WTC11 (cell line): ENCODE measurements at regions of chr17 and their contacts with region 1.

Region 1: DNA sequence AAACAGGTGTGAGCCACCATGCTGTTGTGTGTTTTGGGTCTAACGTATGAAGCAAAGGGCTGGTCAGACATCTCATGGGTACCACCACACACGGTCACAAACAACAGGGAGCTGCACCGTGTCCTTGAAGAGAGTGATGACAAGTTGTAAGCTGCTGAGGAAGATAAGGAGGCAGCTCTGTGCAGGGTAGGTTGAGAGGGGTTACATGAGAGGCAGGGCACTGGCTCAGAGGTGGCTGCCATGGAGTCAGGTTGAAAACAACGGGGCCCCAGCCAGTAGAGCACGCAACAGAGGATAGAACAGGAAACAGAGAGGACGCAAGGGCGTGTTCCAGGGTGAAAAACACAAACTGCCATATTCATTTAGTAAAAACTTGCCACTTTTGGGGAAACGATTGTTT is 52.2 kb downstream of the TRARG1 start:
- DNase-seq: peak; percentile 2
- ATAC-seq: no peak
- H3K4me3 Mint-ChIP-seq: no peak overlapping the region
- H3K27ac Mint-ChIP-seq: peak overlapping the region; percentile 34; the same call in 1 of the 2 replicates
- H3K4me1 Mint-ChIP-seq: no peaks in the 10 kb centered on the region
- H3K27me3 Mint-ChIP-seq: no peaks in the 10 kb centered on the region; the same call in 1 of the 2 replicates
- CTCF ChIP-seq: no peak

Region 2: GRCh38 chr17:1260086-1260769 is 71.5 kb before region 1 on chr17:
- CTCF ChIA-PET with region 1: interaction called, 20 read pairs
- POLR2A ChIA-PET with region 1: no interaction called
- DNase-seq: no peak
- ATAC-seq: no peak; the same call in 1 of the 2 replicates
- H3K4me3 Mint-ChIP-seq: peak overlapping the region; percentile 86
- H3K27ac Mint-ChIP-seq: no peak overlapping the region
- H3K4me1 Mint-ChIP-seq: peaks cover 12% of the 10 kb centered on the region
- H3K27me3 Mint-ChIP-seq: peaks cover 41% of the 10 kb centered on the region
- CTCF ChIP-seq: no peak

Region 3: DNA sequence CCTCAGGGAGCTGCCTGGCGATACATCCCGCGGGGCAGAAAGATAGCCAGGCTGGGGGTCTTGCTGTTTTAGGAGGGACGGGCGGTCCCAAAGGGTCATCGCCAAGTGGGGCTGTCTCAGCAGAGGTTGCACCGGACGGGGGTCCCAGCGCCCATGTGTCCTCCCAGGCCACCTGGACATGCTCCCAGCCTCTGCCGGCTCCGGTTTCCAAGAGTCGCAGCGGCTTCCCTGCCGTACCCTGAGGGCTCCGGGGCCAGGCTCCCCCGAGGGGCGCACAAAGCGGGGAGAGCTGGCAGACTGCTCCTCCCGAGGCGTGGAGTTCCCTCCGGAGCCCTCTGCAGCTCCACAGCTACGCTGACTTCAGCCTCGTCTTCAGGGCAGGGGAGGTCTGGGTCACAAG is 51.1 kb before region 1 on chr17:
- CTCF ChIA-PET with region 1: interaction called, 26 read pairs
- POLR2A ChIA-PET with region 1: interaction called, 3 read pairs
- DNase-seq: no peak
- ATAC-seq: no peak
- H3K4me3 Mint-ChIP-seq: no peak overlapping the region
- H3K27ac Mint-ChIP-seq: no peak overlapping the region
- H3K4me1 Mint-ChIP-seq: no peaks in the 10 kb centered on the region
- H3K27me3 Mint-ChIP-seq: no peaks in the 10 kb centered on the region; the same call in 1 of the 2 replicates
- CTCF ChIP-seq: no peak

Region 4: DNA sequence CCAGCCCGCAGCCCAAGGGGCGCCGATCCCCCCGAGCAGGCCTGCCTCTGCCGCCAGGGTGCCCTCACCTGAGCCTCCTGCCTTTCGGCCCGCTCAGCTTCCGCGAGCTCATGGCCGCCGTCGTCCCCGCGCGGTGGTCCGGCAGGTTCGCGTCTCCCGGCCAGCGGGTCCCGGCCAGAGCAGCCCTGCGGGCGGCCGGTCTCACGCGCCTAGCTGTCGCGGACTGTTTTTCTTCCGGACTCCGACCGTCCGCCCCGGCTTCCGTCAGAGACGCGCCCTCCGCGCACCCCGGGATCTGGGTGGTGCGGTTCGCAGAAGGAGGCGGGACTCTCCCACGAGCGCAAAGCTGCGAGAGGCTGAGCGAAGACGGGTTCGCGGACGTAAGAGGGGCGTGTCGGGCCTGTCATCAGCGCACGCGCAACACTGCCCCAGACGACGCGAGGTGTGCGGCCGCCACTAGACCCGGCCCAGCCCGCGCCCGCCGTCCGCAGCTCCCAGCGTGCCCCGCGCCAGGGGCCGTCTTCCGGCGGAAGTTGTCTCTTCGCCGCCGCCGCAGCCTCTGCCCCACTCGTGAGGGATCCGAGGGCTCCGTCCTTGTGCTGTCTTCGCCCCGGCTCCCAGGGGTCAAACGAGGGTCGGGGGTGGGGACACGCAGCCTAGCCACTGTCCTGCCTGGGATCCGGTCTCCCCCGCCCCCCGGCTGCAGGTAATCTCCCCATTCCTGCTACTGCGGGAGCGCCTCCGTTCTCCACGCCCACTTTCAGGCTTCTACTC is 184.9 kb after region 1 on chr17 and contains the start of gene INPP5K:
- CTCF ChIA-PET with region 1: interaction called, 10 read pairs
- POLR2A ChIA-PET with region 1: no interaction called
- DNase-seq: peak; percentile 93
- ATAC-seq: peak; percentile 93
- H3K4me3 Mint-ChIP-seq: peak within 1 kb of the TSS; percentile 88
- H3K27ac Mint-ChIP-seq: peak within 1 kb of the TSS; percentile 97
- H3K4me1 Mint-ChIP-seq: peaks cover 14% of the 10 kb centered on the region
- H3K27me3 Mint-ChIP-seq: no peaks in the 10 kb centered on the region
- CTCF ChIP-seq: no peak
- total RNA-seq, gene INPP5K: 17.1 to 26.8 TPM (median 18.5 TPM) in 3 replicates